Panc1 (cell line): ENCODE measurements at regions of chr16 and their contacts with region 1.

Region 1: DNA sequence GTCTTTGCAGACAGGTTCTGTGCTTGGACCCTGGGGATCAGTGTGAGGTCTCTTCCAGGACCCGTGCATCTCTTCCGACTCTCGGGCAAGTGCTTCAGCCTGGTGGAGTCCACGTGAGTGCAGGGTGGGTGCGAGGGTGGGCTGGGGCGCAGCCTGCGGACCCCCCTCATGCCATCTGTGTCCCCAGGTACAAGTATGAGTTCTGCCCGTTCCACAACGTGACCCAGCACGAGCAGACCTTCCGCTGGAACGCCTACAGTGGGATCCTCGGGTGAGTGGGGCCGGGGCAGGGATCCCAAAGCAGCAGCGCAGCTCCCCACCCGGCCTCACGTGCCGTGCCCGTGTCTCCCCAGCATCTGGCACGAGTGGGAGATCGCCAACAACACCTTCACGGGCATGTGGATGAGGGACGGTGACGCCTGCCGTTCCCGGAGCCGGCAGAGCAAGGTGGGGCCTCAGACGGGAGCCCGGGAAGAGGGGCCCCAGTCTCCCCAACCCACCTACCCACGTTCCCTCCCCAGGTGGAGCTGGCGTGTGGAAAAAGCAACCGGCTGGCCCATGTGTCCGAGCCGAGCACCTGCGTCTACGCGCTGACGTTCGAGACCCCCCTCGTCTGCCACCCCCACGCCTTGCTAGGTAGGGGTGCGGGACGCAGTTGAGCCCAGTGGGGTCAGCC is 10.1 kb downstream of the GNPTG start:
- DNase-seq: no peak
- ATAC-seq: no peak
- H3K4me3 ChIP-seq: no peak overlapping the region
- H3K27ac ChIP-seq: no peak overlapping the region
- H3K4me1 ChIP-seq: peaks cover 20% of the 10 kb centered on the region
- H3K27me3 ChIP-seq: no peaks in the 10 kb centered on the region
- CTCF ChIP-seq: no peak

Region 2: DNA sequence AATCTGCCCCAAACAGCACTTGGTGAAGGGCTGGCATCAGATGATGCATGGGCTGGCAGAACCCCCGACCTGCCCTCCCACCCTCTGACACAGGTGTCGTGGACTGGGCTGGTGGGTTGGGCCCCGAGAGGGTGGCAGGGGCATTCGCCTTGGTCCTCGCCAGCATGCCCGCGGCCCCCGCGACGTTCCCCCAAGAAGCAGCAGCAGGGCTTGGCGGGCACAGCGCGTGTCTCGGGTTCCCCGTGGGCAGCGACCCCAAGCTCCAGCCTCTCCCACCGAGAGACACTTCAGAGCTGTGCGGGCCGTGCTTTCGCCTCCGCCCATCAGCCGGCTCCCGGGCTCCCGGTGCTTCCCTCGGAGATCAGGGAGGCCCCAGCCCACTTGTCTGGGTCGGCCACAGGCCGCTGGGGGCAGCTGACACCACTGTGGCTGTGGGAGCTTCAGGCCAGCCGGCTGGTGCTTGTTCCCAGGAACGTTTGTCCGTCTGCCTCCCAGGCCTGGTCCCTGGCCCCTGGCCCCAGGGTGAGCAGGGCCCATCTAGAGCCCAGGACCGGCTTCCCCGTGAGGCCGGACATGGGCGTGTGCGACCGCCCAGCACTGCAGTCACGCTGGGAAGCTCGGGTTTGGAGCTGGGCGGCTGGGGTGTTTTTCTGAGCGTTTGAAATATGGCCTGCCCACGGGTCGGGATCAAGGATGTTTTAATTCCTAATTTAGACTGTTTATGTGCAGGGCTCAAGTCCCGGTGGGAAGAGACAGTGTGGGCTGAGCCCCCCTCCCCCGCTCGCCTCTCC is 192.3 kb before region 1 on chr16:
- CTCF ChIA-PET with region 1: no interaction called
- POLR2A ChIA-PET with region 1: no interaction called
- in situ Hi-C with region 1: no loop called
- intact Hi-C with region 1: no loop called
- DNase-seq: no peak
- ATAC-seq: peak; percentile 34
- H3K4me3 ChIP-seq: no peak overlapping the region
- H3K27ac ChIP-seq: peak overlapping the region; percentile 29; the same call in 1 of the 2 replicates
- H3K4me1 ChIP-seq: peaks cover 20% of the 10 kb centered on the region
- H3K27me3 ChIP-seq: no peaks in the 10 kb centered on the region
- CTCF ChIP-seq: no peak

Region 3: DNA sequence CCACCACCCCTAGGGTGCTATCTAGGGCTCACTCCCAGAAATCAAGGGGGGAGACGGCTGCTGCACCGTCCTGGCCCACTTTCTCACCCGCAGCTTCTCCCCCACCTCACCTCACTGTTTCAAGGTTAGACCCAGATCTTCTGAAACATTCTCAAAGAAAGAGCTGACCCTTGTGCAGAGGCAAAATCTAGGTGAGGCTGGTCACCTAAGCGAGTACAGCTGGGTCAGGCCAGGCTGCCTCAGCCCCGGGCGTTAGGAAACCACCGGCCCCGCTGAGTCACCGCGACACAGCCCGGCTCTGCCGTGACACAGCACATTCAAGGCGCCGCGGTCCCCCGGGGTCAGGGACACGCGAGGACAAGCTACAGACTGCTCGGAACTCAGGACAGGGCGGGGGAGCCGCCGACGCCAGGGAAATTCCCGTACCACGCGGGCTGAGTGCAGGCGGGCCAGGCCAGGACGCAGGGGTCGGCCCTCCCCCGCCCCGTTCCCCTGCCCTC is 17.0 kb after region 1 on chr16:
- CTCF ChIA-PET with region 1: interaction called, 3 read pairs
- POLR2A ChIA-PET with region 1: interaction called, 13 read pairs
- in situ Hi-C with region 1: no loop called
- intact Hi-C with region 1: no loop called
- DNase-seq: no peak
- ATAC-seq: peak; percentile 62
- H3K4me3 ChIP-seq: peak overlapping the region; percentile 59 to 68
- H3K27ac ChIP-seq: peak overlapping the region; percentile 65; the same call in 1 of the 2 replicates
- H3K4me1 ChIP-seq: peaks cover 6% of the 10 kb centered on the region; the same call in 1 of the 2 replicates
- H3K27me3 ChIP-seq: no peaks in the 10 kb centered on the region
- CTCF ChIP-seq: no peak

Region 4: DNA sequence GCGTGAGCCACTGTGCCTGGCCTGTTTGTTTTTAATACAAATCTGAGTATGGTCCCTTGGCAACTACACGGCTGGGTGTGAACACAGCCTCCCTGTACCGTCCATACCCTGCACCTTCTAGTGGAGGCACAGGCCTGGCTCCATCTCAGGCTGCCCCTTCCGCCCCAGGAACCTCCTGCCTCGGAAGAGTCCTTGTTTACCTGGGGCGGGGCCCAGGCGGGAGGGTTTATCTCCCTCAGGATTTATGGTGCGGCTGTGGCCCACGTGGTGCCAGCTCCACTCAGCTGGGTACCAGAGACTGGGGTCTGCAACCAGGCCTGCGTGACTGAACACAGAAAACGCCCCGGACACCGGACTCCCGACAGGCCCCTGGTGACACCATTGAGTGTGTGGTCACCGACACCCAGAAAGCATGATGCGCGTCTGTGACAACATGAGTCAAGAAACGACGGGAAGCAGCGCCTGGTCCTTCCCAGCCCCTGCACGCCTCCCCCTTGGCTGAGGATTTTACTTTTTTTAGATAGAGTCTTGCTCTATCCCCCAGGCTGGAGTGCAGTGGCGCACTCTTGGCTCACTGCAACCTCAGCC is 33.7 kb after region 1 on chr16:
- CTCF ChIA-PET with region 1: no interaction called
- POLR2A ChIA-PET with region 1: no interaction called
- in situ Hi-C with region 1: no loop called
- intact Hi-C with region 1: no loop called
- DNase-seq: no peak
- ATAC-seq: no peak
- H3K4me3 ChIP-seq: no peak overlapping the region
- H3K27ac ChIP-seq: no peak overlapping the region
- H3K4me1 ChIP-seq: no peaks in the 10 kb centered on the region
- H3K27me3 ChIP-seq: no peaks in the 10 kb centered on the region
- CTCF ChIP-seq: no peak

Region 5: DNA sequence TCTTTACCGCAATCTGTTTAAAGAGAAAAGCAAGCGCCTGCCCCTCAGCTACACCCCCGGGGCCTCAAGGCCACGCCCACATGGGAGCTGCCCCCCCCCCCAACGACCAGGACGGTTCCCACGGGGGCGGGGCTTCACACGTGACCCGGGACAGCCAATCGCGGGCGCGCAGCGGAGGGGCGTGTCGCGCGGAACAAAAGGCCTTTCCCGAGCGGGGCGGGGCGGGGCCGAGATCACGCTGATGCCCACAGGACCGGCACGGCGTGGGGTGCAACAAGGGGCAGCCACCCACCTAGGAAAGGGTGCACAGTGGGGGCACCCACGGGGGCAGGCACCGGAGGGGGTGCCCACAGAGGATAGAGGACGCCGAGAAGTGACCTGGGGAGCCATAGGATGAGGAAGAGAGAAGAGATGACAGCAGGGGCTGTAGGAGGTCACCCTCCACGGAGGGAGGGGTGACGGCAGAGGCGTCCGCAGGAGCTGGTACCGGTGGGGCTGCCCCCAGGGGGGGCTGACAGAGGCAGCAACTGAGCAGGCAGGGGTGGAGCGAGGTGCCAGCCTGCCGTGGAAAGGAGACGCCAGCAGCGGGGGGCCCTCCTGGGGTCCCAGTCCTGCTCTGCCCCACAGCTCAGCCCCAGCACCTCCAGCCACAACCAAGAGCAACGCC is 46.5 kb after region 1 on chr16:
- CTCF ChIA-PET with region 1: interaction called, 5 read pairs
- POLR2A ChIA-PET with region 1: interaction called, 15 read pairs
- in situ Hi-C with region 1: no loop called
- intact Hi-C with region 1: no loop called
- DNase-seq: no peak
- ATAC-seq: peak; percentile 94
- H3K4me3 ChIP-seq: peak overlapping the region; percentile 61 to 74
- H3K27ac ChIP-seq: peak overlapping the region; percentile 14
- H3K4me1 ChIP-seq: no peaks in the 10 kb centered on the region
- H3K27me3 ChIP-seq: no peaks in the 10 kb centered on the region
- CTCF ChIP-seq: no peak

Region 6: GRCh38 chr16:2350500-2350899 is 988.7 kb after region 1 on chr16:
- CTCF ChIA-PET with region 1: no interaction called
- POLR2A ChIA-PET with region 1: no interaction called
- in situ Hi-C with region 1: no loop called
- intact Hi-C with region 1: no loop called
- DNase-seq: no peak
- ATAC-seq: no peak
- H3K4me3 ChIP-seq: no peak overlapping the region
- H3K27ac ChIP-seq: no peak overlapping the region
- H3K4me1 ChIP-seq: no peaks in the 10 kb centered on the region
- H3K27me3 ChIP-seq: no peaks in the 10 kb centered on the region
- CTCF ChIP-seq: no peak